ENCODE measurements at regions of chrX and their contacts with region 1.

Region 1: DNA sequence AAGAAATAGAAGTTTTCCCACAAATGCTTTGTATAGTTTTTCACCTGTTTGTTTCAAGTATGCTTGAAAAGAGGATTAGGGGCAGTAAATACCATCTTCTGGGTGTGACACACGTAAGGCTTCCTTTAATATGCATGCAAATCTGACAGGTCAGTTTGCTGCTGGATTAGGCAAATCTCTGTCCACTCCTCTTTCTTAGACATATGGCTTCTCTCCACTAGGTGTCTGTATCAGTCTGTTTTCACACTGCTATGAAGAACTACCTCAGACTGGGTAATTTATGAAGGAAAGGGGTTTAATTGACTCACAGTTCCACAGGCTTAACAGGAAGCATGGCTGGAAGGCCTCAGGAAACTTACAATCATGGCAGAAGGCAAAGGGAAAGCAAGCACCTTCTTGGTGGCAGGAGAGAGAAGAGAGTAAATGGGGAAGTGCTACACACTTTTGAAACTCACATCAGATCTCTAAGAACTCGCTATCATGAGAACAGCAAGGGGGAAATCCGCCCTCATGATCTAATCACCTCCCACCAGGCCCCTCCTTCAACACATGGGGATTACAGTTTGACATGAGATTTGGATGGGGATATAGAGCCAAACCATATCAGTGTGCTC is 66.9 kb downstream of the TAB3 start:
- DNase-seq: no peak
- ATAC-seq: no peak
- H3K4me3 ChIP-seq: no peak overlapping the region
- H3K27ac ChIP-seq: no peak overlapping the region
- H3K4me1 ChIP-seq: no peaks in the 10 kb centered on the region
- H3K27me3 ChIP-seq: no peaks in the 10 kb centered on the region
- CTCF ChIP-seq: peak; percentile 21; the same call in 1 of the 2 replicates

Region 2: GRCh38 chrX:30735839-30736238 is 86.3 kb before region 1 on chrX:
- CTCF ChIA-PET with region 1: interaction called, 11 read pairs
- POLR2A ChIA-PET with region 1: no interaction called
- in situ Hi-C with region 1: no loop called
- intact Hi-C with region 1: loop called (anchors 5 kb)
- DNase-seq: peak; percentile 43
- ATAC-seq: peak; percentile 70; the same call in 1 of the 2 replicates
- H3K4me3 ChIP-seq: no peak overlapping the region
- H3K27ac ChIP-seq: no peak overlapping the region
- H3K4me1 ChIP-seq: no peaks in the 10 kb centered on the region
- H3K27me3 ChIP-seq: no peaks in the 10 kb centered on the region
- CTCF ChIP-seq: peak; percentile 76